ENCODE measurements at regions of chr4 and their contacts with region 1.

Region 1: GRCh38 chr4:88523325-88524129 is at the start of gene PYURF:
- DNase-seq: peak; percentile 57
- H3K4me3 ChIP-seq: peak within 1 kb of the TSS; percentile 91
- CTCF ChIP-seq: no peak

Region 2: GRCh38 chr4:88225232-88226105 is 298.1 kb before region 1 on chr4:
- CTCF ChIA-PET with region 1: interaction called, 360 read pairs
- POLR2A ChIA-PET with region 1: no interaction called
- DNase-seq: no peak
- H3K4me3 ChIP-seq: no peak overlapping the region
- CTCF ChIP-seq: no peak

Region 3: DNA sequence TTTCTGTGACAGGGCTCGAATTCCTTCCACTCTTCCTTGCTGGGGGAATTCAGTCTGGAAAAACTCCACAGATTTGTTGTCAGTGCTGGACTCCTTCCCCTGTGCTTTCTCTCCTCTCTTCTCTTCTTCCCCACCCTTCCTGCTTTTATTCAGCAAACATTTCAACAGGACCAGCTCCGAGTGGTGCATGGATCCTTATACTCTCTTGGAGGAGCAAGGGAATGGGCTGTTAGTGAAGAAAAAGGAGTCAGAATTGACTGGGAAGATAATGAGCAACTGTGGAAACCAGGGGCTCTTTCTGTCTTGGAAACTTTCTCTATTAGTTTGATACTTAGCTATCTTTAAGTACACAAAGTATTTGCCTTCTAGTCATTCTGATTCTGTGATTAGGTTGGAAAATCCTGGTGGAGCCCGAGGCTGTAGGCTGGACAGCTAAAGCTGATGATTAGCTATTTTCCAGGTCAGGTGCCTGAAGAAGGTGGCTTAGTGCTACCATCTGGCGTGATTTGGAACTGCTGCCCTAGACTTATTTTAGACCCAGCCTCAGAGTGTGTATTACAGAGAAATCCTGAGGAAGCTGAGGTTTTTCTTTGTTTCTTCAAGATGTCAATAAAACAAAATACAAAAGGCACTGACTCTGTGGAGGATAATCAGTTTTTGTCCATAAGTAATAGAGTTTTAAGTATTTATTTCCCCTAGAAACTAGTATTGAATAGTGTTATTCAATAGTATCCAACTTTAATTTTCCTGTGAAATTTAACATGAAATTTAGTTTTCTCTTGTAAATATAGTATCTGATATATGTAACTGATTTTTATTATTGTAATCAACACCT is 135.7 kb after region 1 on chr4:
- CTCF ChIA-PET with region 1: interaction called, 34 read pairs
- POLR2A ChIA-PET with region 1: no interaction called
- DNase-seq: no peak
- H3K4me3 ChIP-seq: no peak overlapping the region
- CTCF ChIP-seq: peak; percentile 61

Region 4: DNA sequence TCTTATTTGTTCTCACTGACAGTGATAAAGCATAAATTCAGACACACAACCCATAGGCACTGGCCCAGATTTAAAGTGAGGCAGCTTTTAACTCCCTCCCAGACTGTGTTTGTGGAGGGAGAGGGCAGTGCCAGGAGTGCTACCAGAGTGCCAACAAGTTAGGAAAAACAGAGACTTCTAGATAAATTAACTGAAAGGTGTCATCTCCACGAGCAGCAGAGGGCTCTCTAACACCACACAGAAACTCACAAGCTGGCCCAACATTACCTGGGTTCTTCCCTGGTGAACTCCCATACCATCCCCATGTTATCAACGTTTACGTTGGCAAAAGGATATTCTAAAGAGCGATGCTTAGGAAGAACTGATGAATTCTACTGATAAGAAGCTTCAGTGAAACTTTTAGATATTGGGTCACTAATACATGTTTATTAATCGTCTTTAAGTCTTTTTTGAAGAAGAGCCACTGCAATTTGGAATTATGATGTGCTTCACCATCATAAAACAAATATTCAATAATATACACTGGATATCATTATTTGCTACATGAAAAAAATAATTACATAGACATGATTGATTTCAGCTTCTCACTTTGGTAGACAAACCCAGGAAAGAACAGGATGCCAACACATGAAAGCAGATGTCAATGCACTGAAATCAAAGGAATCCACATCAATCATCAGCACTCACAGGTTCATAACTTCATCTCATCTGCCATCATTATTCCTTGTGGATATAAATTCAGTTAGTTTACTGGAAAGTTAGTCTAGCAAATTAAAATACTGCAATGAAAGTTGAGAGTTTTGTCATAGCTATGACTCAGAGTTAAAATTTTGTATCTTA is 295.3 kb after region 1 on chr4:
- CTCF ChIA-PET with region 1: interaction called, 12 read pairs
- POLR2A ChIA-PET with region 1: no interaction called
- DNase-seq: no peak
- H3K4me3 ChIP-seq: no peak overlapping the region
- CTCF ChIP-seq: peak; percentile 45

Measured in AG04449 (cell line).